ENCODE measurements at regions of chr9 and their contacts with region 1.

Region 1: DNA sequence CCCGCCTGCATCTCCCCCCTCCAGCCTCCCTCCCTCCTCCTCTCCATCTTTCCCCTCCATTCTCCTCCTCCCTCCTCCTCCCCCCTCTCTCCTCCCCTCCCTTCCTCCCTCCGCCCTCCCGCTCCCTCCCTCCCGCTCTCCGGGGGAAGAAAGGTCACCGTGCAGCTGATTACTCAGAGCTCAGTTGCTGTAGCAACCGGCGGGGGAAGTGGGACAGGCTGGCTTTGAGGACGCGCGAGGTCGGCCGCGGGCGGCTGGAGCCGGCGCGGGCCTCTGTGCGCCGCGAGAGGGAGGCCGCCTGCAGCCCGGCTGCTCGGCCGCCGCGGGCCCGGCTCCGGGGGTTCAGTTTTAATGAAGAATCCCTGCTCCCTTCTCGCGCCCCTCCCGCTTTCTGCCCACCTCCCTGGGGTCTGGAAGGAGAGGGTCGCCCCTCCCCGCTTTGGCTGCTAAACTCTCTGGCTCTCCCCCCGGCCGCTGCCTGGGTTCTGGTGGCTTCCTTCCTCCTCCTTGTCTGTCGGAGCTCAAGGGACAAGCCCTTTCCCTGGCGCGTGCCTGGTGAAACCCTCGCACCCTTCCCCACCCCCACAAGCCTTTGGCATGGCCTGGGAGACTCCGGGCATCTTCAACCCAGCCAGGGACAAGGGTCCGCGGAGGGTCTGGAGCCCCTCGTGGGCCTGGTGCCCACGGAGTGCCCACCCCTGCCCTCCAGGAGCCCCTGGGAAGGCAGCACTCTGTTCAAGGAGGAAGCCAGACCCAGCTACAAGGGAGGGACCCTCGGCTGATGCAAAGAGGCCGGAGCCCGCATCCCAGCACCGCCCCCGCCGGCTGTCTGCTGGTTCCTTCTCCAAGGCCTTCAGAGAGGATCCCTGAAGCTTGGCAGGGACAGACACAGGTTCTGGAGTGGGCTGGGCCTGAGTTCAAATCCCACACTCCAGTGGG is 160.3 kb downstream of the C9orf50 start:
- DNase-seq: peak; percentile 66 to 95 (median 83)
- H3K4me3 ChIP-seq: peak overlapping the region; percentile 64
- H3K4me3 Mint-ChIP-seq: peak overlapping the region; percentile 67 to 88 (median 76)
- H3K27ac ChIP-seq: peak overlapping the region; percentile 94
- H3K27ac Mint-ChIP-seq: peak overlapping the region; percentile 93 to 98 (median 96)
- H3K4me1 ChIP-seq: peaks cover 45% of the 10 kb centered on the region
- H3K4me1 Mint-ChIP-seq: peaks cover 35 to 63% (median 43%) of the 10 kb centered on the region in 3 donors
- H3K27me3 ChIP-seq: no peaks in the 10 kb centered on the region
- H3K27me3 Mint-ChIP-seq: no peaks in the 10 kb centered on the region

Region 2: DNA sequence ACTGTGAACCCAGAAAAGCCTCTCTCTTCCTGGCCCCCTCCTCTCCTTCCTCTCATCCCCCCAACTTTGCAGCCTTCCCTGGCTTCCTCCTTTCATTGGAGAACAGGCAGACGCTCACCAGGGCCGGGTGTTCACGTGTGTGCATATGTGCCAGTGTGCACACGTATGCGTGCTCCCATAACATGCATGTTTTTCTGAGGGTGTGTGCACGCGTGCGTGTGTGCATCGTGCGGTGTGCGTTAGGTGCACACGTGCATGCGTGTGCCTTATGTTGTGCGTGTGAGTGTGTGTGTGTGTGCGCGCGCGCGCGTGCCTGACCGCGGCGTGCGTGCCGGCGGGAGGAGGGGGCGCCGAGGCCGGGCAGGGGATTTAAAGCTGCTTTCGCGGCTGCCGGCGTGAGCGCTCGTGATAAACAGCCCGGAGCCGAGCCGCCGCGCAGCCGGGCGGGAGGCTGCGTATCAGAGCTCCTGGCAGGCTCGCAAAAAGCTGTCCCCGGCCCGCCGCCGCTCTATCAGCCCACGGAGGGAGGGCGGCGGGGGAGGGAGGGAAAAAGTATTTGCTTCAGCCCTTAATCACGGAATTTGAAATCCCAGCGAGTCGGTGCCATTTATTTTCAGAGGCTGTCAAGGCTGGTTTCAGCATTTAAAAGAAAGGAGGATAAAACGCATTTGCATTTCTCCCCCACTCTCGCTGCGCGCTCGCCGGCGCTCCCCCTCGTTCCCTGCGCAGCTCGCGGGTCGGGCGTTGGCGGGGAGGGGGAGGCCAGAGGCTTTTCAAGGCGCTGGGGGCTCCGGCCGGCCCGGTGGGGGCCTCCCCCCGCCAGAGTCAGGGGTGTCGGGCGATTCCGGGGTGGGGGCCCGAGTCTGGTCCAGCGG is 23.6 kb before region 1 on chr9:
- CTCF ChIA-PET with region 1: interaction called, 11 read pairs
- POLR2A ChIA-PET with region 1: interaction called, 13 read pairs
- DNase-seq: peak in 4 of 5 donors; percentile 8 to 67 (median 40)
- H3K4me3 ChIP-seq: peak overlapping the region; percentile 50
- H3K4me3 Mint-ChIP-seq: peak overlapping the region; percentile 74 to 90 (median 86)
- H3K27ac ChIP-seq: no peak overlapping the region
- H3K27ac Mint-ChIP-seq: peak overlapping the region in 7 of 8 donors; percentile 3 to 92 (median 85)
- H3K4me1 ChIP-seq: peaks cover 19% of the 10 kb centered on the region
- H3K4me1 Mint-ChIP-seq: peaks cover 21 to 38% (median 25%) of the 10 kb centered on the region in 3 donors
- H3K27me3 ChIP-seq: peaks cover 29% of the 10 kb centered on the region
- H3K27me3 Mint-ChIP-seq: peaks cover 43 to 49% of the 10 kb centered on the region in 2 donors

Region 3: DNA sequence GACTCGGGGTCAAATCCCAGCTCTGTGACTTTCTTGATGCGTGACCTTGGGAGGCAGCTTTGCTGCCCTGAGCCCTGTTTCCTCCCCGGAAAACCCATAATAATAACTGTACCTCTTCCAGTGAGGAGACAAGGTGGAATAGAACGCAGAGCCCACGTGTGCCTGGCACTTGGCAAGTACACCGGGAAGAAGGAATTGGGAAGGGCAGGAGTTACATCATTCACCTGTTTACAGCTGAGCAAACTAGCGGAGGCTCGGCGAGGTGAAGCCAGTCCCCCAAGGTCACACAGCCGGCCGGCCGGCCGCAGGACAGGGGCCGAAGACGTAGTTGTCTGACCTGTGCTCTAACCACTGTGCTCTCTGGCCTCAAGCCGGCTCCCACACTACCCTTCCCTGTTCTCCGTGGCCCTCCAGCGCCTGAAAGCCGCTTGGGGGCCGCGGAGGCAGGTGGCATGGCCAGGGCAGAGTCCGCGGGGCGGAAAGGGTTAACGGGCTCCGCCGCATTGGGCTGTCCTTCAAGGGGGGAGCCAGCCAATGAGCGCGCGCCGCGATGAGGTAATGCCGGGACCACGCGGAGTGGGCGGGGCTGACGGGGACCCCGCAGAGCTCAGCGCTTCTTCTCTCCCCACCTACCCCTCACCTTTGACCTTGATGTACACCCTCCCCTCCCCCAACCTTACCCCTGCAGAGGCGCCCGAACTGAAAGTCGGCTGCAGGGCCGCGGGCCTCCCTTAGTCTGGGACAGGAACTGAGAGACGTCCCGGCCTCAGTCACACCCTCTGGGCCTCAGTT is 35.1 kb after region 1 on chr9:
- CTCF ChIA-PET with region 1: interaction called, 8 read pairs
- POLR2A ChIA-PET with region 1: interaction called, 22 read pairs
- DNase-seq: peak; percentile 70 to 89 (median 75)
- H3K4me3 ChIP-seq: peak overlapping the region; percentile 84
- H3K4me3 Mint-ChIP-seq: peak overlapping the region; percentile 79 to 94 (median 84)
- H3K27ac ChIP-seq: peak overlapping the region; percentile 84
- H3K27ac Mint-ChIP-seq: peak overlapping the region; percentile 54 to 92 (median 82)
- H3K4me1 ChIP-seq: peaks cover 26% of the 10 kb centered on the region
- H3K4me1 Mint-ChIP-seq: peaks cover 18 to 55% (median 23%) of the 10 kb centered on the region in 3 donors
- H3K27me3 ChIP-seq: no peaks in the 10 kb centered on the region
- H3K27me3 Mint-ChIP-seq: no peaks in the 10 kb centered on the region

Measured in CD8-positive, alpha-beta memory T cell (primary cell).